K562 (cell line): ENCODE measurements at regions of chr6 and their contacts with region 1.

Region 1: GRCh38 chr6:113858480-113859348 is 1.6 kb downstream of the MARCKS start:
- DNase-seq: peak; percentile 73 to 92 (median 90)
- ATAC-seq: peak; percentile 90
- H3K4me3 ChIP-seq: peak overlapping the region; percentile 42
- H3K27ac ChIP-seq: no peak overlapping the region
- H3K4me1 ChIP-seq: peaks cover 6 to 25% of the 10 kb centered on the region in 2 experiments
- H3K27me3 ChIP-seq: peaks cover 0 to 15% of the 10 kb centered on the region in 2 experiments; a peak in 2 of 5 replicates
- CTCF ChIP-seq: peak; percentile 70 to 89 (median 79)
- EP300 ChIP-seq: no peak
- POLR2A ChIP-seq: no peak
- RAD21 ChIP-seq: peak; percentile 89 to 90

Region 2: DNA sequence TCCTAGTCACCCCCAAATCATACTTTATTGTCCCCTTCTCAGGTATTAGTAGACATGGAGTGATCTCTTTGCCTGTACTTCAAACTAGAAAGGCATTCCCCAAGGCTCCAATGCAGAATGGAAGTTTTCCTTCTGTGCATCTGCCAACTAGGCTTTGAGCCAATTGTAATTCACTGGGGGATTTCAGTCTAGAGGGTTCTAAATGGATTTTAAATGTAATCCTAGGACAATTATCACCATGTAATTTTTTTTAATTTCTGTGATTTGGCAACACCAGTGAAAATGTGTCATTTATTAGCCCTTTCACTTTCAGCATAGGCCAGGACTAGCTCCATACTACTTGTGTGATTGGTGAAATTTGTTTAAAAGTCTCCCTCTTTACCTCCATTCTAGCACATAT is 559.2 kb before region 1 on chr6:
- CTCF ChIA-PET with region 1: no interaction called
- POLR2A ChIA-PET with region 1: no interaction called
- in situ Hi-C with region 1: no loop called
- intact Hi-C with region 1: no loop called
- DNase-seq: no peak
- ATAC-seq: no peak
- H3K4me3 ChIP-seq: no peak overlapping the region
- H3K27ac ChIP-seq: no peak overlapping the region
- H3K4me1 ChIP-seq: no peaks in the 10 kb centered on the region
- H3K27me3 ChIP-seq: no peaks in the 10 kb centered on the region
- CTCF ChIP-seq: no peak
- EP300 ChIP-seq: no peak
- POLR2A ChIP-seq: no peak
- RAD21 ChIP-seq: no peak

Region 3: DNA sequence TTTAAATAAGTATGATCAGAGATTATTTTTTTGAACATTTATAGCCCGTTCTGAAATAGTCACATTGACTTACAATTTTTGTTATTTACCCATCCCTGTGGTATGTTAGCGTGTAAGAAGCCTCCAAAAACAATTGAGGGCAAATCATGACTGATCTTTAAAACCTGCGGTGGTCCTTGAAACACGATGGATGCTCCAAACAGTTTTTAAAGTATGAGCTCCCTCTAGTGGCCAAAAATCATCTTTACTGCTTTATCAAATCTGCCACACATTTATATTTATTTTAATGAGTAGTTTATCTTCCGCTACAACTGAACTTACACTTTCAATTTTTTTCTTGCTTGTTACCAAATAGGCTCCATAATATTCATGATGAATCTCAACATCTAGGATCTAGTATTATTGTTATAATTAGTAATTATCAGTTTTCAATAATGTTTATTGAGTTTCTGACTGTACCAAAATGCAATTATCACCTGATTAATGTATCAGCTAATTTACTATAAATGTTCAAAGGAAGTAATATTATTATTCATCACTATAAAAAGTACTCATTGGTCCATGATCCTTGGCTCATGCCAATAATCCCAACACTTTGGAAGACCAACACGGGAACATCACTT is 50.6 kb after region 1 on chr6:
- CTCF ChIA-PET with region 1: no interaction called
- POLR2A ChIA-PET with region 1: no interaction called
- in situ Hi-C with region 1: no loop called
- intact Hi-C with region 1: loop called (anchors 5 kb)
- DNase-seq: peak; percentile 48 to 69 (median 50)
- ATAC-seq: peak; percentile 75
- H3K4me3 ChIP-seq: no peak overlapping the region
- H3K27ac ChIP-seq: no peak overlapping the region
- H3K4me1 ChIP-seq: no peaks in the 10 kb centered on the region
- H3K27me3 ChIP-seq: no peaks in the 10 kb centered on the region
- CTCF ChIP-seq: peak; percentile 45 to 76 (median 48); a peak in 5 of 6 replicates
- EP300 ChIP-seq: no peak
- POLR2A ChIP-seq: no peak
- RAD21 ChIP-seq: peak; percentile 76 to 80